ENCODE measurements at regions of chr17 and their contacts with region 1.

Region 1: GRCh38 chr17:46942441-46943217 is 19.7 kb downstream of the GOSR2 start:
- DNase-seq: peak; percentile 36
- ATAC-seq: peak; percentile 72
- H3K4me3 ChIP-seq: no peak overlapping the region
- H3K27ac ChIP-seq: no peak overlapping the region
- H3K4me1 ChIP-seq: peaks cover 6% of the 10 kb centered on the region
- H3K27me3 ChIP-seq: no peaks in the 10 kb centered on the region
- CTCF ChIP-seq: peak; percentile 84

Region 2: GRCh38 chr17:46832945-46833839 is 109.4 kb before region 1 on chr17:
- CTCF ChIA-PET with region 1: no interaction called
- POLR2A ChIA-PET with region 1: no interaction called
- in situ Hi-C with region 1: no loop called
- intact Hi-C with region 1: no loop called
- DNase-seq: no peak
- ATAC-seq: no peak
- H3K4me3 ChIP-seq: no peak overlapping the region
- H3K27ac ChIP-seq: no peak overlapping the region
- H3K4me1 ChIP-seq: no peaks in the 10 kb centered on the region
- H3K27me3 ChIP-seq: no peaks in the 10 kb centered on the region
- CTCF ChIP-seq: no peak

Region 3: DNA sequence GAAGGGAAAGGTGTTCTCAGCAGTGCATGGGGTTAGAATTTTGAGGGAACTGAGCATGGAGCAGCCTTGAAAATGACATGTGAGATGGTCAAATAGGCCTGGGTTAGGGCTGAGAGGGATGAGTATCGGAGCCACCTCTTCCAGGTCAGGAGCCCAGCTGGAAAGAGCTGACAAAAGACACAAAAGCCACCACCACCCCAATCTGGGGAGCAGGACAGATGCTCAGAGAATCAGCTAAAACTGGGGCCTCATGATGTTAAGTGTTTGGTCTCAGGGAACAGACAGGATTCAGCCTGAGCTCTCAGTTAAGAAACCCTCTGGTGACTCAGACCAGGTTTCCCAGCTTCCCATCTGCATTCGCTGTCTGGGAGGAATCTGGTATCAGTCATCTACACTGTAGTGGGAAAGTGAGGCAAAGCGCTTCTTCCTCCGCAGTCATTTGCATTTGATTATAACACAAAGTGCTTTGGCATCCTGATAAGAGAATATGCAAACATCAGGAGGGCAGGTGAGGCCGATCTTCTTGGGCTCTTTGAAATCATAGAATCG is 88.7 kb before region 1 on chr17:
- CTCF ChIA-PET with region 1: no interaction called
- POLR2A ChIA-PET with region 1: interaction called, 15 read pairs
- in situ Hi-C with region 1: no loop called
- intact Hi-C with region 1: no loop called
- DNase-seq: no peak
- ATAC-seq: no peak
- H3K4me3 ChIP-seq: no peak overlapping the region
- H3K27ac ChIP-seq: no peak overlapping the region
- H3K4me1 ChIP-seq: no peaks in the 10 kb centered on the region
- H3K27me3 ChIP-seq: peaks cover 2% of the 10 kb centered on the region
- CTCF ChIP-seq: no peak

Region 4: GRCh38 chr17:46995841-46996571 is 53.4 kb after region 1 on chr17:
- CTCF ChIA-PET with region 1: no interaction called
- POLR2A ChIA-PET with region 1: no interaction called
- in situ Hi-C with region 1: no loop called
- intact Hi-C with region 1: loop called (anchors 2 kb)
- DNase-seq: no peak
- ATAC-seq: no peak
- H3K4me3 ChIP-seq: no peak overlapping the region
- H3K27ac ChIP-seq: no peak overlapping the region
- H3K4me1 ChIP-seq: no peaks in the 10 kb centered on the region
- H3K27me3 ChIP-seq: no peaks in the 10 kb centered on the region
- CTCF ChIP-seq: no peak

Region 5: DNA sequence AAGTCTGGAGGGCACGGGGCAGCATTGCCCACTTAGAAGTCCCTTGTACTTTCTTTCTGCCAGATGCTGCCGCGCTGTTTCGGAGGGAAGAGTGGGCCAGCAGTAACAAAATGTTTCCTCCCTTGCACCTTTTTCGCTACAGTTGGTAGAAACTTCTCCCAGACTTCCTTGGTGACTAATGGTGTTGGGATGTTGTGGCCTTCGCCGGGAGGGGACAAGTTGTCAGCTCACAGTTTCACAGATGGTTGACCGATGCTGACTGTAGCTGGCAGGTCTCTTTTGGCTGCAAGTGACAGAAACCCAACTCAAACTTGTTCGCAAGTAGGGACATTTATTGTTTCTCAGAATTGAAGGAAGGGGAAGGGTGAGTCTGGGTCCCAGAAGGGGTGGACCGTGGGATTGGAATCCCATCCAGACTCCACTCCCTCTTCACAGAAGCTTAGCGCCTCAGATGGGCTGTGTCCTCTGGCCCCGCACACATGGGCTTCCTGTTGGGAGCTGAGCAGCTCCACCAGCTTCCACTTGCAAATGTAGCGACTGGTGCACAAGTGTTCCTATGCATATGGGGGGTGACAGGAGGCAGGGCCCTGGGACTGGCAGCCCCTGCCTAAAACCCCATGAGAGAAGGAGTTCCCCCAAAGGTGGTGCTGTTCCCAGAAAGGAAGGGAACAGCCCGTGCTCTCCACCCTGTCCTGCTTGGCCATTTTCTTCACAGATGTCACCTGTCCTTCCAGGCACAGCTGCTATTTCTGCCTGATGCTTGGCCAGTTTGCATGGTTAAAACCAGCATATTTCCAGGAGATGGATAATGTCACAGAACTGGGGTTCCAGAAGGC is 67.3 kb after region 1 on chr17:
- CTCF ChIA-PET with region 1: interaction called, 3 read pairs
- POLR2A ChIA-PET with region 1: interaction called, 10 read pairs
- in situ Hi-C with region 1: no loop called
- intact Hi-C with region 1: no loop called
- DNase-seq: no peak
- ATAC-seq: no peak
- H3K4me3 ChIP-seq: no peak overlapping the region
- H3K27ac ChIP-seq: no peak overlapping the region
- H3K4me1 ChIP-seq: no peaks in the 10 kb centered on the region
- H3K27me3 ChIP-seq: no peaks in the 10 kb centered on the region
- CTCF ChIP-seq: no peak

Region 6: GRCh38 chr17:47066841-47067682 is 124.4 kb after region 1 on chr17:
- CTCF ChIA-PET with region 1: no interaction called
- POLR2A ChIA-PET with region 1: no interaction called
- in situ Hi-C with region 1: no loop called
- intact Hi-C with region 1: no loop called
- DNase-seq: no peak
- ATAC-seq: peak; percentile 99
- H3K4me3 ChIP-seq: peak overlapping the region; percentile 75 to 82
- H3K27ac ChIP-seq: peak overlapping the region; percentile 96
- H3K4me1 ChIP-seq: peaks cover 6% of the 10 kb centered on the region; the same call in 1 of the 2 replicates
- H3K27me3 ChIP-seq: no peaks in the 10 kb centered on the region
- CTCF ChIP-seq: no peak